Transverse colon (tissue), 4 donors: ENCODE measurements at regions of chr17 and their contacts with region 1.

Region 1: GRCh38 chr17:7656958-7657609 is 6.4 kb downstream of the ATP1B2 start:
- DNase-seq: peak; percentile 12
- H3K4me3 ChIP-seq: no peak overlapping the region
- H3K27ac ChIP-seq: peak overlapping the region in 1 of 4 donors; percentile 18
- H3K4me1 ChIP-seq: peaks cover 0 to 8% (median 0%) of the 10 kb centered on the region in 4 donors
- H3K27me3 ChIP-seq: peaks cover 14% of the 10 kb centered on the region
- CTCF ChIP-seq: no peak
- EP300 ChIP-seq: no peak
- POLR2A ChIP-seq: no peak

Region 2: GRCh38 chr17:7677388-7678067 is 20.4 kb after region 1 on chr17:
- in situ Hi-C with region 1: no loop called
- intact Hi-C with region 1: loop called (anchors 1 kb)
- DNase-seq: no peak
- H3K4me3 ChIP-seq: no peak overlapping the region
- H3K27ac ChIP-seq: no peak overlapping the region
- H3K4me1 ChIP-seq: no peaks in the 10 kb centered on the region
- H3K27me3 ChIP-seq: no peaks in the 10 kb centered on the region
- CTCF ChIP-seq: no peak
- EP300 ChIP-seq: no peak
- POLR2A ChIP-seq: no peak

Region 3: GRCh38 chr17:7774037-7774659 is 117.1 kb after region 1 on chr17:
- in situ Hi-C with region 1: no loop called
- intact Hi-C with region 1: no loop called
- DNase-seq: no peak
- H3K4me3 ChIP-seq: no peak overlapping the region
- H3K27ac ChIP-seq: no peak overlapping the region
- H3K4me1 ChIP-seq: no peaks in the 10 kb centered on the region
- H3K27me3 ChIP-seq: peaks cover 5% of the 10 kb centered on the region
- CTCF ChIP-seq: no peak
- EP300 ChIP-seq: no peak
- POLR2A ChIP-seq: no peak